HCT116 (cell line): ENCODE measurements at regions of chr1 and their contacts with region 1.

Region 1: DNA sequence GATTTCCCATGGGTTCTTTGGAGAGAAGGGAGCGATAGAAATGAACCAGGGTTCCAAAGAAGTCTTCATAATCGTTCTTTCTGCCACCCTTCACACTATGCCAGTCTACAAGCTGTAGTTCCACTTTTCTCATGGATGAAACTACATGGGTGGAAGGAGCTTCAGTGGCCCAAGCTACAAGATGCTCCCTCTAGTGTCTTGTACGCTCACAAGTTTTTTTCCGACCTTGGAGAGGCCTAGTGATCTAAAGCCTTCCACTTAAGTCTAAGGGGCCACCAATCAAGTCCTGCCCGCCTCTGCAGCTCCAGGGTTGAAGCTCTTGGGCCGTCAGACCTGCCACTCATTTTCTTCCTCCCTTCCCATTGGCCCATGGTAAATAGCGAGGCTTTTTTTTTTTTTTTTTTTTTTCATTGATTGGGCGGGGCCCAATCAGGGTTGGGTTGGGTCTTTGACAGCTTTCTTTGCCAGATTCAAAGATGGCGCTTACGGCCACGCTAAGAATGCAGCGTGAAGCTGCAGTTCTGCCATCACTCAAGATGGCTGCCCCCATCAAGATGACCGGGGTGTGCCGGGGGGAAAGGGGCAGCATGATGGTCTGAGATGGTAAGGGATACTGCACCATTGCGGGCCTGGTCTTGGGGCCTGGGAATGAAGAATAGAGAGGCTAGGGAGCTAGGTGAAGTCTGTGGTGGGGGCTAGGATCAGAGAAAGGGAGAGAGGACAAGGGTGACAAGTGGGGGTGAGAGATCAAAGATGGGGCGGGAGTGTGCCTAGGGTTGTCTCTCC is at the start of gene TOMM40L:
- DNase-seq: peak; percentile 99
- ATAC-seq: peak; percentile 93
- H3K4me3 ChIP-seq: peak within 1 kb of the TSS; percentile 66 to 72
- H3K27ac ChIP-seq: peak within 1 kb of the TSS; percentile 69
- H3K4me1 ChIP-seq: peaks cover 14 to 24% of the 10 kb centered on the region in 2 experiments; a peak in 3 of 4 replicates
- H3K27me3 ChIP-seq: no peaks in the 10 kb centered on the region
- CTCF ChIP-seq: peak; percentile 51 to 58 (median 58); a peak in 5 of 6 replicates
- POLR2A ChIP-seq: no peak
- RAD21 ChIP-seq: peak; percentile 54
- total RNA-seq, gene TOMM40L: 9.8 TPM

Region 2: GRCh38 chr1:161209790-161210409 is 15.8 kb before region 1 on chr1:
- CTCF ChIA-PET with region 1: interaction called, 13 read pairs
- POLR2A ChIA-PET with region 1: interaction called, 3 read pairs
- RAD21 ChIA-PET with region 1: interaction called, 3 read pairs
- intact Hi-C with region 1: no loop called
- DNase-seq: peak; percentile 61
- ATAC-seq: peak; percentile 99
- H3K4me3 ChIP-seq: no peak overlapping the region
- H3K27ac ChIP-seq: no peak overlapping the region
- H3K4me1 ChIP-seq: peaks cover 0 to 10% of the 10 kb centered on the region in 2 experiments; a peak in 2 of 4 replicates
- H3K27me3 ChIP-seq: no peaks in the 10 kb centered on the region
- CTCF ChIP-seq: peak; percentile 82 to 96 (median 94)
- POLR2A ChIP-seq: no peak
- RAD21 ChIP-seq: peak; percentile 87

Region 3: GRCh38 chr1:161292631-161293030 is 66.9 kb after region 1 on chr1:
- CTCF ChIA-PET with region 1: interaction called, 26 read pairs
- POLR2A ChIA-PET with region 1: interaction called, 3 read pairs
- RAD21 ChIA-PET with region 1: interaction called in 1 of 2 experiments, 7 read pairs
- intact Hi-C with region 1: loop called (anchors 1 kb)
- DNase-seq: no peak
- ATAC-seq: no peak
- H3K4me3 ChIP-seq: no peak overlapping the region
- H3K27ac ChIP-seq: no peak overlapping the region
- H3K4me1 ChIP-seq: 0 out of 4 replicates have a peak, but pooled peaks cover 0 to 2% of the 10 kb centered on the region in 2 experiments
- H3K27me3 ChIP-seq: no peaks in the 10 kb centered on the region
- CTCF ChIP-seq: no peak
- POLR2A ChIP-seq: no peak
- RAD21 ChIP-seq: no peak

Region 4: DNA sequence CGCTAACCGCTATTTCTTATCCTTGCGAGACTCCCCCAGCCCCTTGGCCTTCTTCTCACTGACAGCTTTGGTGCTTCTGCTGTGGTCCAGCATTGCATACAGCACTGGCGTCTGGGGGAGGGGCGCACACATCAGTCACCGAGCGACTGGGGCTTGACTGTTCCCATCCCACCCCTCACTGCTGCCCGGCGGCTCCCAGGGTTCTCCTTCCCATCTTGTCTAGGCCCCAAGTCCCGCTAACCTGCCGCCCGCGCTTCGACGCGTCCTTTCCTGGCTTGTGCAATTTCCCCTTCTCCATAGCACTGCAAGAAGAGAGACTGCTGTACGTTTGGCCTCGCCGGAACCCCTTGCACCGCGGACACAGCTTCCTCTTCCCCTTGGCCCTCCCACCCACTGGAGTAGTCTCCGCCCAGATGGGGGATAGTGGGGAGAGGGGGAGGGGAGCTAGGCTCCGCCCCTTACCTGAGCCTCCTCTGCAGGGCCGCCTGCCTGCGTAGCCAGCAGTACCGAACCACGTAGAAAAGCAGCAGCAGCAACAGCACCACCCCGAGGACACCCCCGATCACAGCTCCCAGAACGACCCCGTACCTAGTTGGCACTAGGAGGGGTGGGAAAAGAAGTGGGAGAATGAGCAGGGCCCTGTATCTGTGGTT is 80.3 kb after region 1 on chr1:
- CTCF ChIA-PET with region 1: interaction called, 20 read pairs
- POLR2A ChIA-PET with region 1: interaction called, 9 read pairs
- RAD21 ChIA-PET with region 1: interaction called in 1 of 2 experiments, 3 read pairs
- intact Hi-C with region 1: loop called (anchors 1 kb)
- DNase-seq: peak; percentile 80
- ATAC-seq: peak; percentile 99
- H3K4me3 ChIP-seq: peak overlapping the region; percentile 93 to 97
- H3K27ac ChIP-seq: peak overlapping the region; percentile 59; the same call in 1 of the 2 replicates
- H3K4me1 ChIP-seq: peaks cover 8 to 31% of the 10 kb centered on the region in 2 experiments; a peak in 3 of 4 replicates
- H3K27me3 ChIP-seq: no peaks in the 10 kb centered on the region
- CTCF ChIP-seq: peak; percentile 30 to 64 (median 53); a peak in 5 of 6 replicates
- POLR2A ChIP-seq: no peak
- RAD21 ChIP-seq: peak; percentile 47

Region 5: GRCh38 chr1:161382214-161383019 is 156.7 kb after region 1 on chr1:
- CTCF ChIA-PET with region 1: interaction called, 46 read pairs
- POLR2A ChIA-PET with region 1: no interaction called
- RAD21 ChIA-PET with region 1: no interaction called
- intact Hi-C with region 1: loop called (anchors 1 kb)
- DNase-seq: peak; percentile 45
- ATAC-seq: peak; percentile 86
- H3K4me3 ChIP-seq: no peak overlapping the region
- H3K27ac ChIP-seq: no peak overlapping the region
- H3K4me1 ChIP-seq: peaks cover 5 to 14% of the 10 kb centered on the region in 2 experiments; a peak in 3 of 4 replicates
- H3K27me3 ChIP-seq: no peaks in the 10 kb centered on the region
- CTCF ChIP-seq: peak; percentile 56 to 85 (median 72)
- POLR2A ChIP-seq: no peak
- RAD21 ChIP-seq: peak; percentile 84